ENCODE measurements at regions of chr7 and their contacts with region 1.

Region 1: GRCh38 chr7:35537067-35538023 is 157.6 kb downstream of the HERPUD2 start:
- DNase-seq: peak; percentile 53
- H3K4me3 ChIP-seq: peak overlapping the region in 1 of 3 experiments; percentile 35
- H3K27ac ChIP-seq: no peak overlapping the region
- H3K4me1 ChIP-seq: no peaks in the 10 kb centered on the region
- H3K27me3 ChIP-seq: no peaks in the 10 kb centered on the region
- CTCF ChIP-seq: peak; percentile 88 to 96

Region 2: DNA sequence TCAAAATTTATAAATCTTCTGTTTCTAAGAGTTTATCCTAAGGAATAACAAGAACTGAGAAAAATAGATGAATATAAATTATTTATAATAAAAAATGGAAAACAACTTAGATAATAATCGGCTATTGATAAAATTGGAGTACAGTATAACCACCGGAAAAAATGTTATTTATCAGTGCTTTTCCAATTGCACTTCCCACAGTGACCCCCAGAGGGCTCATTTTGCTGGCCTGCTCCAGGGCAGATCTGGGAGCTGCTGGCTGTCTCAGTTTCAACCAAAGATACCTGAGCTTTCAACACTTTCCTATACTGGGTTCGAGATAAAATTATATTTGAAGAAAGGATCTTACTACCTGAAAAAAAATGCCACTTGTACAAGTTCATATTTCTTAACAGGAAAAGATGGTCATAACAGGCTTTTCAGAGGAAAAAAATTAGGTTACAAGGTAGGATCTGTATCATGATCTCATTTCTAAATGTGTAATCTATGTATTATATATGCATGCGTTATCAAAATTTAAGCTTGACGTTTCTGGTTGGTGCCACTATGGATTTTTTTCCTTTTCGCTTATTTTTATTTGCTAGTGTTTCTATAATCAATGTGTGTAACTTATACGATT is 713.6 kb before region 1 on chr7:
- CTCF ChIA-PET with region 1: no interaction called
- dilution Hi-C with region 1: no loop called
- in situ Hi-C with region 1: no loop called
- intact Hi-C with region 1: loop called (anchors 2 kb)
- DNase-seq: peak; percentile 25
- H3K4me3 ChIP-seq: no peak overlapping the region
- H3K27ac ChIP-seq: no peak overlapping the region
- H3K4me1 ChIP-seq: no peaks in the 10 kb centered on the region
- H3K27me3 ChIP-seq: no peaks in the 10 kb centered on the region
- CTCF ChIP-seq: peak; percentile 85 to 91

Region 3: GRCh38 chr7:35185907-35186731 is 351.2 kb before region 1 on chr7:
- CTCF ChIA-PET with region 1: no interaction called
- dilution Hi-C with region 1: no loop called
- in situ Hi-C with region 1: loop called in 1 of 2 experiments (anchors 25 kb)
- intact Hi-C with region 1: loop called (anchors 5 kb)
- DNase-seq: peak; percentile 10
- H3K4me3 ChIP-seq: peak overlapping the region in 2 of 3 experiments; percentile 12 to 19
- H3K27ac ChIP-seq: no peak overlapping the region
- H3K4me1 ChIP-seq: peaks cover 10% of the 10 kb centered on the region
- H3K27me3 ChIP-seq: peaks cover 4% of the 10 kb centered on the region
- CTCF ChIP-seq: no peak

Region 4: GRCh38 chr7:35454575-35455385 is 82.6 kb before region 1 on chr7:
- CTCF ChIA-PET with region 1: no interaction called
- dilution Hi-C with region 1: loop called (anchors 5 kb)
- in situ Hi-C with region 1: no loop called
- intact Hi-C with region 1: no loop called
- DNase-seq: no peak
- H3K4me3 ChIP-seq: no peak overlapping the region
- H3K27ac ChIP-seq: no peak overlapping the region
- H3K4me1 ChIP-seq: no peaks in the 10 kb centered on the region
- H3K27me3 ChIP-seq: peaks cover 12% of the 10 kb centered on the region
- CTCF ChIP-seq: no peak

Region 5: DNA sequence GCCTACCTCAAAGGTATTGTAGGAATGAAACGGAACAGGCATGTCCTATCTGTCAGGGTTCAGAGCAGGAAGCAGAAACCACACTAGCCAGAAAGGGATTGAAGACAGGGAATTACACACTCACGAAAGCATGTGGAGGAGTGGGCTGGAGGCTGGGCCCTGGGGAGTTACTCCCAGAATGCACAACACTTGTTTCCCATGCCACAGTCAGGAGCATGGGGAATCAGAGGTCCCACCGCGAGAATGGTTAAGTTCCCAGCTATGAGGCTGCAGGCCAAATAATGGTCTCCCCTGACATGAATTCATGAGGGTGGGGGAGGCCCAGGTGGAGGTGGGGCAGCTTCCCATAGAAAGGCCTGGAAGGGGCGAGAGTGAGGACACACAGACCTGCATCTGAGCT is 55.1 kb before region 1 on chr7:
- CTCF ChIA-PET with region 1: interaction called, 24 read pairs
- dilution Hi-C with region 1: no loop called
- in situ Hi-C with region 1: no loop called
- intact Hi-C with region 1: no loop called
- DNase-seq: no peak
- H3K4me3 ChIP-seq: no peak overlapping the region
- H3K27ac ChIP-seq: no peak overlapping the region
- H3K4me1 ChIP-seq: no peaks in the 10 kb centered on the region
- H3K27me3 ChIP-seq: peaks cover 3% of the 10 kb centered on the region
- CTCF ChIP-seq: no peak

Region 6: DNA sequence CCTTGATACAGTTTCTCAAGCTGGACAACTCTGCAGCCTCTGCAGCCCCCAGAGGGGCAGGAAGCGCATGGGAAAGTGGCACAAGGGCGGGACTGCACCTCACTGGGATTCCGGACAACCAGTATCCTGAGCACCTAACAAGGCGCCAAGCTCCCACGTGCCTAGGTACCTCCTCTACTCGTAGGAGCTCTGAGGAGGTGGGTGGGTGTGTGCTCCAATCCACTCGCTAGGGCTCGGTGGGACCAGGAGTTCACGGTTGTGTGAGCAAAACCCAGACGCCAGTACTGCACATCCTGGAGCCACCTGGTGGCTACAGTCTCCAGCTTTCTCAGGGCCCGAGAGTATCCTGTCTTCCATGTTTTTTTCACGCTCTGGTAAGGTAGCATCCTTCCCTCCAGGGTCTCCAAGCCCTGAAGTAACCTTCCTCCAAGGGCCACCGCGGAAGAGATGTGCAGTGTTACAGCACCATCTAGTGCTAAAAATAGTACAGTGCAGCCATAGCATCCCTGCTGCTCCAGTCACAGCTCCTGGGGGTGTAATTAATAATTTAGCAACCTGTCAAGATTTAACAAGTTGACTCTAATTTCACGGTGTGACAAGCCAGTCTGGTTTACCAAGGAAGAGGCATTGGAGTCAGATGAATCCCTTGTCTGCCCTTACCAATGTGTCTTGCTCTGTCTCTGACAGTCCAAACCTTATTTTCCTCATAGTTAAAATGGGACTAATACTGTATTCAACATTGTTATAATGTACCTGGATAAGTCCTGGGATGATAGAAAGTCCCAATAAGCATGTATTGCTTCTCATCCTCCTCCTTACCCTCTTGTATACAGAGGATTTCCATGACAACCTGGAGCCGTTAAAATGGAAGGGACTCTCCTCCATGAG is 87.2 kb after region 1 on chr7:
- CTCF ChIA-PET with region 1: no interaction called
- dilution Hi-C with region 1: no loop called
- in situ Hi-C with region 1: no loop called
- intact Hi-C with region 1: loop called (anchors 2 kb)
- DNase-seq: peak; percentile 19
- H3K4me3 ChIP-seq: no peak overlapping the region
- H3K27ac ChIP-seq: no peak overlapping the region
- H3K4me1 ChIP-seq: no peaks in the 10 kb centered on the region
- H3K27me3 ChIP-seq: no peaks in the 10 kb centered on the region
- CTCF ChIP-seq: peak; percentile 82 to 84

Region 7: GRCh38 chr7:35801392-35802101 is 264.2 kb after region 1 on chr7:
- CTCF ChIA-PET with region 1: no interaction called
- dilution Hi-C with region 1: no loop called
- in situ Hi-C with region 1: no loop called
- intact Hi-C with region 1: no loop called
- DNase-seq: peak; percentile 70
- H3K4me3 ChIP-seq: peak overlapping the region; percentile 95
- H3K27ac ChIP-seq: peak overlapping the region; percentile 91
- H3K4me1 ChIP-seq: peaks cover 14% of the 10 kb centered on the region
- H3K27me3 ChIP-seq: no peaks in the 10 kb centered on the region
- CTCF ChIP-seq: peak; percentile 33 to 62